Mammary epithelial cell (primary cell): ENCODE measurements at regions of chr12 and their contacts with region 1.

Region 1: GRCh38 chr12:10153271-10154144 is 18.4 kb downstream of the OLR1 start:
- DNase-seq: peak; percentile 43
- H3K4me3 ChIP-seq: peak overlapping the region; percentile 17 to 51 (median 45)
- H3K27ac ChIP-seq: no peak overlapping the region
- H3K4me1 ChIP-seq: peaks cover 6% of the 10 kb centered on the region
- H3K27me3 ChIP-seq: no peaks in the 10 kb centered on the region
- CTCF ChIP-seq: peak; percentile 52 to 75

Region 2: DNA sequence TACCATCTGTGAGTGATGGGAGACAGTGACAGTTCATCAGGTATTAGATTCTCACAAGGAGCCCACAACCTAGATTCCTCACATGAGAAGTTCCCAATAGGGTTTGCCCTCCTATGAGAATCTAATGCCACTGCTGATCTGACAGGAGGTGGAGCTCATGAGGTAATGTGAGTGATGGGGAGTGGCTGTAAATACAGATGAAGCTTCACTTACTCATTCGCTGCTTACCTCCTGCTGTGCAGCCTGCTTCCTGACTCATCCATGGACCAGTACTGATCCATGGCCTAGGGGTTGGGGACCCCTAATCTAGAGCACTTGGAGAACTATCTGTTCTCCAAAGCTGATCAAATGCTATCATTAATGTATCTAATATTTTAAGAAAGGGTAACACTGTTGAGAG is 466.3 kb before region 1 on chr12:
- CTCF ChIA-PET with region 1: no interaction called
- dilution Hi-C with region 1: no loop called
- in situ Hi-C with region 1: no loop called
- intact Hi-C with region 1: no loop called
- DNase-seq: no peak
- H3K4me3 ChIP-seq: no peak overlapping the region
- H3K27ac ChIP-seq: no peak overlapping the region
- H3K4me1 ChIP-seq: no peaks in the 10 kb centered on the region
- H3K27me3 ChIP-seq: no peaks in the 10 kb centered on the region
- CTCF ChIP-seq: no peak

Region 3: GRCh38 chr12:10175846-10176636 is 22.5 kb after region 1 on chr12:
- CTCF ChIA-PET with region 1: interaction called, 13 read pairs
- dilution Hi-C with region 1: no loop called
- in situ Hi-C with region 1: no loop called
- intact Hi-C with region 1: loop called (anchors 1 kb)
- DNase-seq: peak; percentile 93
- H3K4me3 ChIP-seq: peak overlapping the region in 1 of 3 experiments; percentile 5
- H3K27ac ChIP-seq: peak overlapping the region; percentile 92
- H3K4me1 ChIP-seq: peaks cover 35% of the 10 kb centered on the region
- H3K27me3 ChIP-seq: no peaks in the 10 kb centered on the region
- CTCF ChIP-seq: peak in 1 of 2 donors; percentile 30

Region 4: GRCh38 chr12:10190558-10191388 is 37.3 kb after region 1 on chr12:
- CTCF ChIA-PET with region 1: interaction called, 6 read pairs
- dilution Hi-C with region 1: no loop called
- in situ Hi-C with region 1: loop called in 1 of 2 experiments (anchors 5 kb)
- intact Hi-C with region 1: loop called (anchors 1 kb)
- DNase-seq: peak; percentile 60
- H3K4me3 ChIP-seq: no peak overlapping the region
- H3K27ac ChIP-seq: no peak overlapping the region
- H3K4me1 ChIP-seq: peaks cover 18% of the 10 kb centered on the region
- H3K27me3 ChIP-seq: no peaks in the 10 kb centered on the region
- CTCF ChIP-seq: peak; percentile 85 to 97

Region 5: DNA sequence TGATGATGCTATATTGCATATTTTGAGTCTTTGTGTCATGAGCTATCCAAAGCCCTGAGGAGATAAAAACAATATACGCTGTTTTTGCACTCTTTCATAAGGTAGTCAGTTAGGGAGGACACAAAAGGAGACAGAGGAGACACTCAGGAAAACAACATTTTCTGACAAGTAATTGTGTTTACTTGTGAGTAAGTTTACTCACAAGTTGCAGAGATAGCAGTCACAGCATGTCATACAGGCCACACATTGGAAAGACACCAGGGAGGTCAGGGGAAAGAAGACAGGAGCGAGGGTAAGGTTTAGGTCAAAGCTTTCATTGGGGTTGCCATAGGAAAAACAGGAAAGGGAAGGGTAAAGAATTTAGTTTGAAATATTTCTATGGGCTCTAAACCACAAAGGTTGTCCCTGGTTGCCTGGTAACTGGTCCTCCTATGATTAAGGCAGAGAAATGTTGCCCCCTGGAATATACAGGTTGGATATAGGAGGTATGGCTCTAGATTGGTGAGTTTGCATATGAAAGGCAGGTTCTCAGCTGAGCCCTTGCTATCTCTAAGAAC is 51.8 kb after region 1 on chr12:
- CTCF ChIA-PET with region 1: no interaction called
- dilution Hi-C with region 1: loop called (anchors 5 kb)
- in situ Hi-C with region 1: no loop called
- intact Hi-C with region 1: no loop called
- DNase-seq: no peak
- H3K4me3 ChIP-seq: no peak overlapping the region
- H3K27ac ChIP-seq: peak overlapping the region; percentile 38
- H3K4me1 ChIP-seq: peaks cover 10% of the 10 kb centered on the region
- H3K27me3 ChIP-seq: no peaks in the 10 kb centered on the region
- CTCF ChIP-seq: no peak

Region 6: DNA sequence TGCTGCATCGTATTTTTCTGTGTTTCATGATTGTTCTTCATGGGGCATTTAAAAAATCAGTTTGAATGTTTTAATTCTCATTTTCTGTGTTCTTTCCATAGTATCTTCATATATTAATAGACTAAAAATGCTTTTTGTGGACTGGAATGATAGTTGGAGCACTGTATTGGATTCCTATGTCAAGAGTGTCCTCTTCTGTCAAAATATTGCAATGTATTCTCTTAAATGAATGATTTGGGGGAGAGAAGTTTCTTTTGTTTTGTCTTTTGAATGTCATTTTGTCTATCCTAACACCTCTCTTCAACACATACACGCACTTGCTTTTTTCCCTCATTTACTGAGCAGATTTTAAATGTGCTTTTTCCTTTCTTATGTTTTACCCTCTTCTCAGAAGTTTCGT is 347.5 kb after region 1 on chr12:
- CTCF ChIA-PET with region 1: no interaction called
- dilution Hi-C with region 1: no loop called
- in situ Hi-C with region 1: no loop called
- intact Hi-C with region 1: loop called (anchors 2 kb)
- DNase-seq: peak; percentile 9
- H3K4me3 ChIP-seq: no peak overlapping the region
- H3K27ac ChIP-seq: no peak overlapping the region
- H3K4me1 ChIP-seq: no peaks in the 10 kb centered on the region
- H3K27me3 ChIP-seq: peaks cover 4% of the 10 kb centered on the region
- CTCF ChIP-seq: peak; percentile 40 to 67